ENCODE measurements at regions of chr10 and their contacts with region 1.

Region 1: GRCh38 chr10:15106352-15107013 is 9.3 kb downstream of the RPP38 start:
- DNase-seq: no peak
- H3K4me3 ChIP-seq: no peak overlapping the region
- H3K27ac ChIP-seq: no peak overlapping the region
- H3K27me3 ChIP-seq: no peaks in the 10 kb centered on the region
- CTCF ChIP-seq: peak; percentile 95

Region 2: GRCh38 chr10:14954001-14954770 is 152.3 kb before region 1 on chr10 and contains the start of gene DCLRE1C:
- CTCF ChIA-PET with region 1: interaction called, 28 read pairs
- POLR2A ChIA-PET with region 1: no interaction called
- DNase-seq: peak; percentile 72
- H3K4me3 ChIP-seq: peak within 1 kb of the TSS; percentile 87
- H3K27ac ChIP-seq: peak within 1 kb of the TSS; percentile 93
- H3K27me3 ChIP-seq: no peaks in the 10 kb centered on the region
- CTCF ChIP-seq: no peak
- polyA plus RNA-seq, gene DCLRE1C: 5.5 and 6.4 TPM in 2 replicates

Region 3: DNA sequence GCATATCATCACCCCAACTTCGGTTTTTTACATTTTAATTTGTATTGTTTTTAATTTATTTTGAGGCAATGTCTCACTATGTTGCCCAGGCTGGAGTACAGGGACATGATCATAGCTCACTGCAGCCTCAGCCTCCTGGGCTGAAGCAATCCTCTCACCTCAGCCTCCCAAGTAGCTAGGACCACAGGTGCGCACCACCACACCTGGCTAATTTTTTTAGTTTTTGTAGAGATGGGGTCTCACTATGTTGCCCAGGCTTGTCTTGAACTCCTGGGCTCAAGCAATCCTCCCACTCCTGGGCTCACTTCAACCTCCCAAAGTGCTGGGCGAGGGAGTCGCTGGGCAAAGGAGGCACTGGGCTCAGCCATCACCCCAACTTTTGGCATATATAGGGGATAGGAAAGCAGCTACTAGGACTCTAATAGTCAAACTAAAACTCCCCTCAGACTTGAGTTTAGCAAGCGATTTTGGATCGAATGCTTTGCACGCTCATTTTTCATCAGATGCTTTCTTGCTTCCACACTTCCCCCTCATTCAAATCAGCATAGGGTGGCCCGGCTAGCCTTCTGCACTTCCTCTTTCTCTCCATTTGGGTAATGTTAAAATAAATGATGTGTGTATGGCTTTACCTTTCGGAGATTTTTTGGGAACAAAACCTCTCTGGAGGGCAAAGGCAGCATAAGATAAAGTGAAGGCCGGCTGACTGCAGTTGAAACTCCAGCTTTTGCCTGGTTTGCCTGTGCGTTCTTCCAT is 82.8 kb after region 1 on chr10:
- CTCF ChIA-PET with region 1: no interaction called
- POLR2A ChIA-PET with region 1: no interaction called
- DNase-seq: no peak
- H3K4me3 ChIP-seq: no peak overlapping the region
- H3K27ac ChIP-seq: no peak overlapping the region
- H3K27me3 ChIP-seq: no peaks in the 10 kb centered on the region
- CTCF ChIP-seq: no peak

Measured in AG04450 (cell line).